Posterior vena cava (tissue), 2 donors: ENCODE measurements at regions of chr19 and their contacts with region 1.

Region 1: DNA sequence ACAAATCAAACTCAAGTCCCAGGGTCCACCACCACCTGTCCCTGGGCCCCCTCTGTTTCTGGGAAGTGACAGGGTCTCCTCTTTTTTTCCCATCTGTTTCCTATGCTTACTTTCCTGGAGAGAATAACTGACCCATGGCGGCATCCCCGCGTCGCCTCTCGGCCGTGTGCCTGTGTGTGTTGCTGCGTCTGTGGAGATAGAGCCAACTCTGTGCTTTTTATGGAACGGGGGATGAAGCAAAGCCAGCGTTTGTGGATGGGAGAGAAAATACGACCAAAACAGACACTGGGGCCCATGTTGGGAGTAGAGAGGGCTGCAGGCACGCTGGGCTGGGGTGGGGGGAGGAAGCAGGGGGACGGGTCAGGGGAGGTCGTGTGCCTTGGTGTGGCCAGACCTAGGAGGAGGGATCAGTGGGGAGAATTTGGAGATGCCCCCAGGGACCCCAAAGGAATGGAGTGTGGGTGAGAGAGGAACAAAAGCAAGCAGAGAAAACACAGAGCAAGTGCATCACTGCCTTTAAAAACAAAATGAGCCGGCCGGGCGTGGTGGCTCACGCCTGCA is 16.6 kb downstream of the PLK5 start:
- DNase-seq: no peak

Region 2: DNA sequence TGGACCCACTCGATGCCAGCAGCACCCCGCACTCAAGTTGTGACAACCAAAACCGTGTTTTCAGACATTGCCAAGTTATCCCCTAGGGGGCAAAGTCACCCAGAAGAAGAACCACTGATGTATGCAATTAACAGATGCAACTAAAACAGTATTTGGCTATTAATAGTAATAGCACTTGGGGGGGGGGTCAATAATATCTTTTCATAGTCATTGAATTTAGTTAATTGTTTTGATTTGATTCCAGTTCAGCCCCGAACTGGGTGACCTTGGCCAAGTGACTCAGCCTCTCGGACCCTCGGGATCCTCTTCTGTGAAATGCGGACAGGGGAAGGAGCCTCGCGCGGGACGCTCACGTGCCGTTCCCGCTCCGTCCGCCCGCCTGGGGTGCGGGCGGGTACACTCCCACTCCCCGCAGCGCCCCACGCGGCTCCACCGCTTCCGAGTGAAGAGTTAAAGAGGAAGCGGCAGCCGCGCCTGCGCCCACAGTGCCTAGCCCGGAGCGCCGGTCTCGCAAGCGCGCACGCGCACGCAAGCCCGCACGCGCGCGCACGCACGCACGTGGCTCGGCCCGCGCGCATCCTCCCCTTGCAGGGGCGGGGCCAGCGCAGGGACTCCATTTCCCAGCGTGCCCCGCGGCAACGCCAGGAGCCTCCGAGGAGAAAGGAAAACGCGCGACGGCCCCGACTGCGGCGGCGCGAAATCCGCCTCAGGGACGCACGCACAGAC is 133.5 kb before region 1 on chr19:
- intact Hi-C with region 1: no loop called
- DNase-seq: peak; percentile 100

Region 3: DNA sequence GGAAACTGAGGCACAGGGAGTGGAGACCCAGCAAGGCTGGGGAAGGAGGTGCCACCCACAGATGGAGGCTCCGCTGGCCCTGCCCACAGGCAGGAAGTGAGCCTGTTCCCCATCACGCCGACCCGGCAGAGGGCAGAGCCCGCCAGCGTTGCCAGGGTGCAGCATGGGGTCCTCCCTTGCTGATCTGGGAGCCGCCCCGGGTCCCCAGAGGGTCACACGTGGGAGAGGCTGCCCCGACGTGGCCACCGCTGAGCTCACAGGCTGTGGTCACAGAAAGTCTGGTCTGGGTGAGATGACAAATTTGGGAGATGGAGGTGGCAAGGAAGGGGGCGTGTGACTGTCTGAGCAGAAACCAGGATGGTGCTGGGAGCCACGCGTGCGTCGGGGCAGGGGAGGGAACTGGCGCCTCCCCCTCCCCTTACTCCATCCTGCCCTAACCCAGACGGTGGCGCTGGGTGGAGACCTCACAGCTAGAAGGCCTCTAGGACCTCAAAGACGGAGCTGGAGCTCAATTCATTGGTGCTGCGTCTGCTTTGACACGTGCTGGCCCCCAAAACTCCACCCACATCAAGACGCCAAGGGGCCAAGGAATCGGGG is 19.9 kb after region 1 on chr19:
- intact Hi-C with region 1: loop called in 1 of 2 experiments (anchors 1 kb)
- DNase-seq: no peak

Region 4: DNA sequence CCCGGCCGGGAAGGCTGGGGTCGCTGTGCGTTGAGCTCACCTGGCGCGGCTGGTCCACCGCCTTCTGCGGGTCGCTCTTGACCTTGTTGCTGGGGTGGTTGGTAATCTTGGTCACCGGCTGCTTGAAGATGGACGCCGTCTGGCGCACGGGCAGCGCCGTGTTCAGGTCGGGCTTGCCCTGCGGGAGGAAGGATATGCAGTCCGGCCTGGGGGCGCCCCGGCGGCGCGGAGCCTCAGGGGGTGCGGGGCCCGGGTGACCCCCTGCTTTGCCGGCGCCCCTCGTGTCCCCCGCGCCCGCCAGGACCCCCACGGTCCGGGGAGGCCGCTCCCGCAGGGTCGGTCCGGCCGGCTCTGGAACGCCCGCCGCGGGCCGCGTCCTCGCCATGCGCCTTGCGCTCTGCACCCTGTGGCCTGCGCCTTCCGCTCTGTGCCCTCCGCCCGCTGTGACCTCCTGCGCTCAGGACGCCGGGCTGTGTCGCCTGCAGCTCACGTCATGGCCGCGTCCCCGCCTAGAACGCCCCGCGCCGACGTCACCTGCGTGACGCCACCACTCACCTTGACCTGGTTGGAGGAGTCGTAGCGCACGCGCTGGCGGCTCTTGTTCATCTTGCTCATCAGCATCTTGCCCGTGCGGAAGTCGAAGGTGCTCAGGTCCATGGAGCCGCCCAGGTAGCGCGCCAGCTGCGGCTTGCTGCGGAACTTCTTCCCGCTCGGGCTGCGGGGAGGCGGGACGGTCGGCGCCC is 44.2 kb after region 1 on chr19:
- intact Hi-C with region 1: no loop called
- DNase-seq: no peak

Region 5: DNA sequence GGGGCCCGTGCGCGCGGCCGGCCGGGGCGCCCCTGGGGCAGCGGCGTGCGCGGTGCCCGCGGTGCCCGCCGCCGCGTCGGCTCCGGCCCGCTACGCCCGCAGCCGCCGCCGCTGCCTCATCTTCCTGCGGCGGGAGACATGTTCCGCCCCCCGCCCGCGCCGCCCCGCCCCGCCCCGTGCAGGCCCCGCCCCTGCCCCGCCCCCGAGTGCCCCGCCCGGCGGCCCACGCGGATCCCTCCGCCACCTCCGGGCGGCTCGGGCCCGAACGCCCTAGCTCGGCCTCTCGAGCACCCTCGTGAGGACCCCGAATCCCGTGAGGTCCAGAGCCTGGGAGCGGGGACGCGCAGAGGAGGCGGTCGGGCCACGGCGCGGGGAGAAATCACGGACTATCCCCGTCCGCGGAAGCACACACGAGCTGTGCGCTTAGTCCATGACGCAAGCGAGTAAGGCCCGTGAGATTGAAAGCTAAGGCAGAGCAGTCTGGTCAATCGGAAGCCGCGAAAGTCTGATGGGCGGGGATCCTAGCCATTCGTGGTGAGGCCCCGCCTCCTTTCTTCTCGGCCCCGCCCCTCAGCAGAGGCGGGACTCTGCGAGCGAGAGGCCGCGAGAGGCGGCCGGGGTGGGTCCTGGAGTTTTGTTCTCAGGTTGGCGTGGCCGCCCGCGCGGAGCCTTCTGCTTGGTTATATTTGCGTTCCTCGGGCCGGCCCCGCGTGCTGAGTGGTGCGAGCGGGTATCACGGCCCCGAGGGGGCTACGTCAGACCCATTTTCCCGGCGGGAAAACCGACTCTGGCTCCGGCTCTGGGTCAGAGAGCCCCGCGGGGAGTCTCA is 112.2 kb after region 1 on chr19 and contains the start of gene TCF3:
- intact Hi-C with region 1: loop called in 1 of 2 experiments (anchors 10 kb)
- DNase-seq: peak; percentile 99
- total RNA-seq, gene TCF3: 26.2 to 36.4 TPM